ENCODE measurements at regions of chr15 and their contacts with region 1.

Region 1: DNA sequence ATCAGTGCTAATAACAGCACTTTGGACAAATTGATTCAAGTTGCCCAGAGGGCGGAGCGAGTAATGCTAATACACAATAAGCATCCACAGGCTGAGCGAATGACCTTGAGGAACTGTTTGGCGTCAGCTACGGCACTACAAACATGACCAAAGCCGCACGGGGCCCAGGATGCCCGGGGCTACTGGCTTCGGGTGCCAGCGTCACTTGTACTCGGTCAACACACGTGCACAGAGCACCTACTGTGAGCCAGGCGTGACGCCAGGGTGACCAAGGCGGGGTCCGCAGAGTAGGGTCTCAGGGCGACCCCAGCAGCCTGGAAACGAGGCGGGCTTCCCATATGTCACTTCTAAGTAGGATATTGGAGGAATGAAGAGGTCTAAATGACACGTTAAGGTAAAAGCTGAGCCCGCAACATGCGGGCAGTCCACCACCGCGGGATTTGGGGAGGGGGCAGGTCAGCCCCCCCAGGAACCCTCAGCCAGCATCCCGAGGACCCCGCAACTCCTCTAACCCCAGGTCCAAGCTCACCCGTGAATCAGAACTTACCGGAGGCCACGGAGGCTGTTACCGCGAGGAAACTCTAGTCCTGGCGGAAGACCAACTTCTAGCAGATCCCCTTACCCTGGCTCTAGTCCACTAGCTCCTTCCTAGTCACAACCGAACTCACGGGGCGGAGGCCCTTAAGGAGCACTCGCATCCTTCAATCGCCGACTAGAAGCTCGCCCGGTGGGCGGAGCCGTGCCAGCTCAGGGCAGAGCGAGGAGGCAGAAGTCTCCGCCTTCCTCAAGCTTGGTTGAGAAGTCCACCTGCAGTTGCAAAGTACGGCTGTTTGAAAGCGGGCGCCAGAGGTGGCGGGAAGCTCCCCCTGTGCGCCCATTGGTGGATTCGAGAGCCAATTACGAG is at the start of gene CEP152:
- DNase-seq: peak; percentile 93
- ATAC-seq: peak; percentile 96
- H3K4me3 Mint-ChIP-seq: peak within 1 kb of the TSS; percentile 94
- H3K27ac Mint-ChIP-seq: peak within 1 kb of the TSS; percentile 86
- H3K4me1 Mint-ChIP-seq: peaks cover 24% of the 10 kb centered on the region
- H3K27me3 Mint-ChIP-seq: peaks cover 3% of the 10 kb centered on the region
- CTCF ChIP-seq: no peak
- total RNA-seq, gene CEP152: 12.1 and 15.4 TPM in 2 replicates

Region 2: GRCh38 chr15:48330855-48331795 is 479.5 kb before region 1 on chr15 and contains the start of gene DUT:
- CTCF ChIA-PET with region 1: no interaction called
- POLR2A ChIA-PET with region 1: no interaction called
- intact Hi-C with region 1: loop called (anchors 1 kb)
- DNase-seq: peak; percentile 72
- ATAC-seq: peak; percentile 79
- H3K4me3 Mint-ChIP-seq: peak within 1 kb of the TSS; percentile 98
- H3K27ac Mint-ChIP-seq: peak within 1 kb of the TSS; percentile 97
- H3K4me1 Mint-ChIP-seq: peaks cover 28% of the 10 kb centered on the region
- H3K27me3 Mint-ChIP-seq: no peaks in the 10 kb centered on the region
- CTCF ChIP-seq: no peak
- total RNA-seq, gene DUT: 75.7 and 81.6 TPM in 2 replicates

Region 3: GRCh38 chr15:48794697-48795134 is 15.9 kb before region 1 on chr15:
- CTCF ChIA-PET with region 1: interaction called, 3 read pairs
- POLR2A ChIA-PET with region 1: interaction called, 5 read pairs
- intact Hi-C with region 1: loop called (anchors 1 kb)
- DNase-seq: peak; percentile 16
- ATAC-seq: peak; percentile 91
- H3K4me3 Mint-ChIP-seq: peak overlapping the region; percentile 71
- H3K27ac Mint-ChIP-seq: peak overlapping the region; percentile 93
- H3K4me1 Mint-ChIP-seq: peaks cover 13% of the 10 kb centered on the region
- H3K27me3 Mint-ChIP-seq: no peaks in the 10 kb centered on the region
- CTCF ChIP-seq: no peak

Region 4: GRCh38 chr15:49046220-49047102 is 235.8 kb after region 1 on chr15 and contains the start of gene SECISBP2L:
- CTCF ChIA-PET with region 1: no interaction called
- POLR2A ChIA-PET with region 1: interaction called, 11 read pairs
- intact Hi-C with region 1: loop called (anchors 1 kb)
- DNase-seq: peak; percentile 82
- ATAC-seq: peak; percentile 97
- H3K4me3 Mint-ChIP-seq: peak within 1 kb of the TSS; percentile 97
- H3K27ac Mint-ChIP-seq: peak within 1 kb of the TSS; percentile 95
- H3K4me1 Mint-ChIP-seq: peaks cover 36% of the 10 kb centered on the region
- H3K27me3 Mint-ChIP-seq: no peaks in the 10 kb centered on the region
- CTCF ChIP-seq: no peak
- total RNA-seq, gene SECISBP2L: 52.6 and 56.5 TPM in 2 replicates

Region 5: DNA sequence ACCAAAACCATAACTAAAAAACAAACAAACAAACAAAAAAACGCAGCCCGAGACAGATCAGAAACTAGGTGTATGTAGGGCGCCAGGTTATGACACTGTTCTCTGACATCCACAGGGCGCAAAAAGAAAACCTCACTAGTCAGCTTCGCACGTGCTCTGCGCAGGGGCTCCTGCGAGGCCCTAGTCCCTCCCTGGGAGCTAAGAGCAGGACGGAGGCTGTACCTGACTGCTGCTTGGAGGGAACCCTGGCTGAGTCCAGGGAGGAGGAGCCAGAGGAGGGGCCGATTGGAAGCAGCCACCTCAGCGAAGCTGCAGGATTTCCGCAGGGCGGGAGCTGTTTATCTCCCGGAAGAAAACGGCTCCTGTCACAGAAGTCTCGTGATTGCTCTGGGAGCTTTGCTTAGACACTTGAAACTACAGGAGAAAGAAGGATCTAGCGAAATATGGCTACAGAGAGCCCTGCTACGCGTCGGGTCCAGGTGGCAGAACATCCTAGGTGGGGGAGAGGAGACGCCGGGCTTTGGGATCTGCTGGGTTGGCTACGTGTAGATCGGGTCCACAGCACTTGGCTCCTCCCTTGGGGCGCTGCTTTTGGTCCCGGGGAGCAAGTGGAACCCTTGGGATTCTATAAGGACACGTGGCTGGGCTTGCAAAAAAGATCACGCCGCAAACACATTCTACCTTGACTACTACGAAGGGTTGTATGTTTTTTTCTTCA is 359.4 kb after region 1 on chr15 and contains the start of gene GALK2:
- CTCF ChIA-PET with region 1: no interaction called
- POLR2A ChIA-PET with region 1: no interaction called
- intact Hi-C with region 1: loop called (anchors 5 kb)
- DNase-seq: peak; percentile 42
- ATAC-seq: peak; percentile 90
- H3K4me3 Mint-ChIP-seq: peak within 1 kb of the TSS; percentile 97
- H3K27ac Mint-ChIP-seq: peak within 1 kb of the TSS; percentile 85
- H3K4me1 Mint-ChIP-seq: peaks cover 30% of the 10 kb centered on the region
- H3K27me3 Mint-ChIP-seq: no peaks in the 10 kb centered on the region
- CTCF ChIP-seq: no peak
- total RNA-seq, gene GALK2: 16.6 and 18.4 TPM in 2 replicates

Region 6: DNA sequence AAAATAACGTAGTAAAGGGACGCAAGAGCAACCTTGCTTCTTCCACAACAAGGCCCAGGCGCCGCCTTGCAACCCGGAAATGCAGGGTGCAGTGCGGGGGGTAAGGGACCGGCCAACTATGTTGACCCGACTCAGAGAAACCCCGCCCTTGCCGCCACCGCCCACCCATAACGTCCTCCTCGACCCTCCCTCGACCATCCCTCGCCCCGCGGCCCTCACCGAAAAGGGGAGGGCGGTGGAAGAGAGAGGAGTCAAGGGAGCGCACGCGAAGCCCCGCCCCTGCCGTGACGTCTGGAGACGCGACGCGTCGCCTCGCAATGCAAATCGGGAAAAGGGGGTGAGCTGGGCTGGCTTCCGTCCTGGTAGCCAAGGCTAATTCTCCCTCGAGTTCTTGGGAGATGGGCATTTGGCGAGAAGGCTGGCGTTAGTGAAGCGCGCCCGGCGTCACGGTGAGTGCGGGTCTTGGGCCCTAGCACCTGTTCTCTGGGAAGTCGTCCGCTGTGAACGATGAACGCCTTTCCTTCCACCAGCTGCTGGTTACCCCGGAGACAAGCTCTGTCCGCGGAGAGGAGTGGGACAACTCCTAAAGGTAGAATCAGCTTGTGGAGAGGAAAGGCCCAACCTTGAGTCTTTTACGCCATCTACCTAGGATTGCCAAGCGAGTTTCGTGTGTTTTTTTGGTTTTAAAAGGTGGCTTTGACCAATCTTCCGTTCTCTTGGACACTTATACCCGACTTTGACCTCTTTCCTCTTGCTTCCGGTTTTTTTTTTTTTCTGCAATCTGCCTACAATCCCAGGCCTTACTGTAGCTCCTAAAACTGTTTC is 1613.6 kb after region 1 on chr15 and contains the start of gene USP8:
- CTCF ChIA-PET with region 1: no interaction called
- POLR2A ChIA-PET with region 1: no interaction called
- intact Hi-C with region 1: loop called (anchors 2 kb)
- DNase-seq: peak; percentile 90
- ATAC-seq: peak; percentile 98
- H3K4me3 Mint-ChIP-seq: peak within 1 kb of the TSS; percentile 90
- H3K27ac Mint-ChIP-seq: peak within 1 kb of the TSS; percentile 89
- H3K4me1 Mint-ChIP-seq: peaks cover 44% of the 10 kb centered on the region
- H3K27me3 Mint-ChIP-seq: no peaks in the 10 kb centered on the region
- CTCF ChIP-seq: no peak
- total RNA-seq, gene USP8: 71.3 and 78.3 TPM in 2 replicates

Measured in activated B cell treated with CpG ODN at 0.5 μM for 24 hours (primary cell).